Right cardiac atrium (tissue), 5 donors: ENCODE measurements at regions of chr7 and their contacts with region 1.

Region 1: GRCh38 chr7:47088329-47089067 is 493.4 kb downstream of the TNS3 start:
- DNase-seq: peak; percentile 50 to 82 (median 79)
- ATAC-seq: peak; percentile 88 to 94
- H3K4me3 ChIP-seq: no peak overlapping the region
- H3K27ac ChIP-seq: no peak overlapping the region
- H3K4me1 ChIP-seq: peaks cover 5% of the 10 kb centered on the region
- H3K27me3 ChIP-seq: no peaks in the 10 kb centered on the region

Region 2: GRCh38 chr7:45917658-45918057 is 1170.8 kb before region 1 on chr7:
- intact Hi-C with region 1: loop called (anchors 5 to 10 kb)
- DNase-seq: peak; percentile 82 to 93 (median 91)
- ATAC-seq: peak; percentile 29 to 57
- H3K4me3 ChIP-seq: peak overlapping the region; percentile 9
- H3K27ac ChIP-seq: no peak overlapping the region
- H3K4me1 ChIP-seq: peaks cover 5% of the 10 kb centered on the region
- H3K27me3 ChIP-seq: no peaks in the 10 kb centered on the region

Region 3: DNA sequence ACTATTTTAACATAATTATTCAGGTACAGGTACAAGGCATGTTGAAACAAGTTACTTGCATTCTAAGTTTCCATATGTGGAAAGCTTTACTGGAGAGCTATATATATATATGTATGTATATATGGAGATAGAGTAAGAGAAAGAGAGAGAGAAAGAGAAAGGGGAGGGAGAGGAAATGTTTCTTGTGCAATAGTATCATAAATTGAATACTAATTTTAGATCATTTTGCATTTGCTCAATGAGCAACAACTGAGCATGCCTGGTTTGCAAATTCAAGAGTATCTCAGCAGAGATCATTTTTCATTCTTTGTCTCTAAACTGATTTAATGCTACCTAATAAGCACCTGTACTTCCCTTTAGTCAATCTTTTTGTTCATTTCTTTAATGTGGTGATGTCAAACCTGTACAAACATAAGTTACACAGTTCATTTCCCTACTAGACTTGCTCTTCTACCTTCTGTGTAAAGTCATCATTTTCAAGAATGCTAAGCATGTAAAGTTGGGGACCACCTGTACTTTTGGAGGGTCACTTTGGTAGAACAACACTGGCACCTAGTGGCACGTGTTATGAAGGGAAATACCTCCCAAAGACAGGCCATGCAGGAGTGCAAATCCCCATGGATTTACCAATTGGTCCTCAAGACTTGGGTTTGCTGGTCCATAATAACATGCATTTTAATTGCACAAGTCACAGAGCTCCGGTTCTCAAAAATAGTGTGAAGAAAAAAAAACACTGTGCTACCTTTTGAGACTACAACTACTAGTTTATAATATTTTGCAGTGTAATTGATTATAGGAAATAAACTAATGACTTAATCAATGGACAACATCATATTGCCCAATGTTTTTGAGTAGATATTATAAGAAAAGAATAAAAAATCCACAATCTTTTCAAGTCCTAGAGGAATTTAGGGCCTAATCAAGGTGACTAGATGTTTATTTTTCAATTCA is 736.2 kb before region 1 on chr7:
- intact Hi-C with region 1: loop called in 1 of 4 experiments (anchors 10 kb)
- DNase-seq: peak in 1 of 3 donors; percentile 59
- ATAC-seq: peak; percentile 54 to 60
- H3K4me3 ChIP-seq: no peak overlapping the region
- H3K27ac ChIP-seq: no peak overlapping the region
- H3K4me1 ChIP-seq: no peaks in the 10 kb centered on the region
- H3K27me3 ChIP-seq: no peaks in the 10 kb centered on the region

Region 4: DNA sequence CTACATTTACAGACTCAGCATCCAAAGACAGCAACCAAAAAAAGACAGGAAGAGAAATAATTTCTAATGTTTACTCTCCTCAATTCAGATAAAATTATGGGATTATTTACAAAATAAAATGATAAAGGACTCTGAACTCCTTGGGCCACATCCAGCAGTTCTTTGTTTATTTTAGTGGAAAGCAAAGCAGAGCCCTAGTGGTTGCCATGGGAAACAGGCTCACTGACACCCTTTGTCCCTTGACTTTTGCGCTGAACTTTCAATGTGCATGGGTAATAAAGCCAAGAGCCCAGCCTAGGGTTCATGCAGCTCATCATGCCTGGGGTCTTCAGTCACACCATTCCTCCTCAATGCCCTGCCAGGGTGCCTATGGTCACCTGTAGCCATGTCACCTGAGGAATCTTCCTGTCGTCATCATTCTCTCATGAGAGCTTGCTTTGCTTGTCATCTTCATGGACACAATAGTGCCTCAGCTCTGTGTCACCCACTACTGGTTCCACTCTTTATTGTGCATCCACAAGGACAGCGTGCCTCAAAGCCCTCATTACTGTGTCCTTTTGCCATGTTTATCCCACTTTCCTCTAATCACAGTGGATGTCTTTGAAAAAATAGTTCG is 724.7 kb before region 1 on chr7:
- intact Hi-C with region 1: loop called in 3 of 4 experiments (anchors 5 to 10 kb)
- DNase-seq: no peak
- ATAC-seq: peak in 1 of 2 donors; percentile 11
- H3K4me3 ChIP-seq: no peak overlapping the region
- H3K27ac ChIP-seq: no peak overlapping the region
- H3K4me1 ChIP-seq: no peaks in the 10 kb centered on the region
- H3K27me3 ChIP-seq: no peaks in the 10 kb centered on the region

Region 5: GRCh38 chr7:46369933-46370654 is 718.4 kb before region 1 on chr7:
- intact Hi-C with region 1: loop called in 1 of 4 experiments (anchors 10 kb)
- DNase-seq: no peak
- ATAC-seq: peak in 1 of 2 donors; percentile 56
- H3K4me3 ChIP-seq: no peak overlapping the region
- H3K27ac ChIP-seq: no peak overlapping the region
- H3K4me1 ChIP-seq: no peaks in the 10 kb centered on the region
- H3K27me3 ChIP-seq: no peaks in the 10 kb centered on the region

Region 6: GRCh38 chr7:46764100-46764936 is 324.2 kb before region 1 on chr7:
- intact Hi-C with region 1: loop called in 1 of 4 experiments (anchors 10 kb)
- DNase-seq: peak in 1 of 3 donors; percentile 17
- ATAC-seq: peak; percentile 81 to 93
- H3K4me3 ChIP-seq: no peak overlapping the region
- H3K27ac ChIP-seq: no peak overlapping the region
- H3K4me1 ChIP-seq: peaks cover 5% of the 10 kb centered on the region
- H3K27me3 ChIP-seq: no peaks in the 10 kb centered on the region

Region 7: DNA sequence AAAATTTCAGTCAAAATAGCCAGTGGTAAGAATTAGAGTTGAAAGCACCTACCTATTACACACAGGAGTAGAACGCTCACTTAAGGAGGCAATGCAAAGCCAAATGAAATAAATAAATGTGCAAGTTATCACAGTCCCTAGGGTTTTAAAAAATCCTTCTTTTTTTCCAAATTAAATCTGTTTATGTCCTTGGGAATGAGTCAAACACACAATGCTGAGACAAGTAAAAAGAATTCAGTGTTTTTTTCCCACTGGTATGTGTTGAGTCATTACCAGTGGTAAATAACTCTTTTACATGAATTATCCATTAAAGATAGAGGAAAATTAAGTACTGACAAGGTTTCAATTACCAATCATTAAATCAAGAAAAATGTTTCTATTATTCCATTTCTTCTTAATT is 54.8 kb after region 1 on chr7:
- intact Hi-C with region 1: no loop called
- DNase-seq: no peak
- ATAC-seq: no peak
- H3K4me3 ChIP-seq: no peak overlapping the region
- H3K27ac ChIP-seq: no peak overlapping the region
- H3K4me1 ChIP-seq: no peaks in the 10 kb centered on the region
- H3K27me3 ChIP-seq: no peaks in the 10 kb centered on the region

Region 8: DNA sequence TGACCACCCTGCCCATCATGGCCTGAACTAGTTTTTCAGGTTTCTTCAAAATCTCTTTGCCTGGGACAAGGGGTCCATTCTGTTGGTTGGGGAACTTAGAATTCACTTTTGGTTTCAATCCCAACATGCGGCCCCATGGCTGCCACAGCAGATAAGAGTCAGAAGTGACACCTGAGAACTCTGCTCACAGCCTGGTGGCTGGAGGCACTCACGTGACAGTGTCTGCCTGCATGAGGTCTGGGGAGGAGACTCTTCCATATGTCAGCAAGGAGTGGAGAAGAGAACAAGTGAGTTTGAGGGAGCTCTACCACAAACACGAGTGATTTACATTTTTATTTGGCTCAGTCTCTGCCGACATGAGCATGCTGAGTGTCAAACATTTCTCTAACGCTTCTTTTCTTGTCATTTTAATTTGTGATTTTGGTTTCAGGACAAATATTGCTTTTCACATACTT is 123.0 kb after region 1 on chr7:
- intact Hi-C with region 1: no loop called
- DNase-seq: no peak
- ATAC-seq: no peak
- H3K4me3 ChIP-seq: no peak overlapping the region
- H3K27ac ChIP-seq: no peak overlapping the region
- H3K4me1 ChIP-seq: no peaks in the 10 kb centered on the region
- H3K27me3 ChIP-seq: no peaks in the 10 kb centered on the region

Region 9: GRCh38 chr7:47354831-47355541 is 266.5 kb after region 1 on chr7:
- intact Hi-C with region 1: no loop called
- DNase-seq: peak in 2 of 3 donors; percentile 72 to 76
- ATAC-seq: peak; percentile 51 to 53
- H3K4me3 ChIP-seq: no peak overlapping the region
- H3K27ac ChIP-seq: peak overlapping the region; percentile 21
- H3K4me1 ChIP-seq: no peaks in the 10 kb centered on the region
- H3K27me3 ChIP-seq: no peaks in the 10 kb centered on the region